ENCODE measurements at regions of chr11 and their contacts with region 1.

Region 1: DNA sequence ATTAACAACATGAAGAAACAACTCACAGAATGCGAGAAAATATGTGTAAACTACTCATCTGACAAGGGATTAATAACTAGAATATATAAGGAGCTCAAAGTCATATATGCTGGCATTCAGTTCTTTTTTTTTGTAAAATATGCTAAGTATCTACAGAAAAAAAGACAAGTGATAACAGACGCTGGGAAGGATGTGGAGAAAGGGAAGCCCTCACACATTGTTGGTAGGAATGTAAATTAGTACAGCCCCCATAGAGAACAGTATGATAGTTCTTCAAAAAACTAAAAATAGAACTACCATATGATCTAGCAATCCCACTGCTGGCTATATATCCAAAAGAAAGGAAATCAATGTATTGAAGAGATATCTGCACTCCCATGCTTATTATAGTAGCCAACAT is 13.8 kb downstream of the GAB2 start:
- DNase-seq: no peak
- H3K4me3 ChIP-seq: no peak overlapping the region
- H3K4me3 Mint-ChIP-seq: no peak overlapping the region
- H3K27ac ChIP-seq: peak overlapping the region in 1 of 2 donors; percentile 43
- H3K27ac Mint-ChIP-seq: peak overlapping the region; percentile 24 to 86 (median 66)
- H3K4me1 ChIP-seq: peaks cover 17 to 35% of the 10 kb centered on the region in 2 donors
- H3K4me1 Mint-ChIP-seq: peaks cover 54% of the 10 kb centered on the region
- H3K27me3 ChIP-seq: no peaks in the 10 kb centered on the region
- H3K27me3 Mint-ChIP-seq: peaks cover 0 to 1% (median 1%) of the 10 kb centered on the region in 3 donors
- CTCF ChIP-seq: no peak

Region 2: DNA sequence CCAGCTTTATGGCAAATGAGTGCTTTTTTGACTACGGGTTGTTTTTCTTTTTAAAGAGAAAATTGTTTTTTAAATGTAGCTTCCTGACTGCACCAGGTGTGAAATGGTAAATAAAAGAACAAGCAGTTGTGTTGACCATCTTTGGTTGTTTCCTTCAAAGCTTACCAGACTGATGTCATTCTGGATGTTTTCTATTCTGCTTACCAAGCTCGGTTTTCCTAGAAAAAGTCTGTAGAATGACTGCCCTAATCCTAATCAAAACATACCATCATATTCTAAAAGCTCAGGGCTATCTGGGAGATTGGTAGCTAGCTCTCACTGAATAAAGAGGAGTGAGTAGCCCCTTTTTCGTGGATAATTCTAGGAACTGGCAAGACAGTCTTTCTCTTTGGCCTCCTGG is 63.8 kb before region 1 on chr11:
- intact Hi-C with region 1: loop called in 1 of 2 experiments (anchors 5 kb)
- DNase-seq: no peak
- H3K4me3 ChIP-seq: no peak overlapping the region
- H3K4me3 Mint-ChIP-seq: no peak overlapping the region
- H3K27ac ChIP-seq: no peak overlapping the region
- H3K27ac Mint-ChIP-seq: peak overlapping the region in 1 of 7 donors; percentile 30
- H3K4me1 ChIP-seq: peaks cover 27 to 43% of the 10 kb centered on the region in 2 donors
- H3K4me1 Mint-ChIP-seq: peaks cover 62% of the 10 kb centered on the region
- H3K27me3 ChIP-seq: no peaks in the 10 kb centered on the region
- H3K27me3 Mint-ChIP-seq: no peaks in the 10 kb centered on the region
- CTCF ChIP-seq: no peak